ENCODE measurements at regions of chr17 and their contacts with region 1.

Region 1: DNA sequence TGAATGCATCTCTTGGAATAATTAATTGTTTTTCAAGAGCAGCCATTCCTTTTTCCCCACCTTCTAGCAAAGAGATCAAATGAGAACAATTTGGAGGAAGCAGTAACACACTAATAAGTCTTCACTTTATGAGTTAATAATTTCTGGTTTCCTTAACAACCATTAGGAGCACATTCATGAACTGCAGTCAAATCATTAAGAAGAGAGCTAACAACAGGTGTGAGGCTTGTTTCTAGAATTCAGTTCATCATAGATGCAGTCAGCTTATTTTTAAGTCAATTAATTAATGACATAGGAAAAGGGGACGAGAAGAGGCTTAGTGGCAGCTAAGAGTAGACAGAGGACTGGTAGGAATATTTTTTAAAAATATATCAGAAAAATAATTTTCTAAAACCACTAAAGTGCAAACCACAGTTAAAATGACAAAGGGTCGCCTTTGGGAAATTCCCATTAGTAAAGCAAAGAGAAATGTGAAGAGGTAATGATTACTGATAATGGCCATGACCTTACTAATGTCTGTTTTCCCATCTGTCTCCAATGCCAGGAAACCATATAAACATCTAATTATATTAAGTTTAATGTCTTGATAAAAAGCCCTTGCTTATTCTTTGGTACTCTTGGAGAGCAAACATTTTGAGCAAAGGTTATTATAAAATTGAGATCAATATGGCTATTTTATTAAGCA is 184.2 kb downstream of the KCNJ2 start:
- DNase-seq: no peak
- ATAC-seq: peak; percentile 83
- H3K4me3 ChIP-seq: no peak overlapping the region
- H3K27ac ChIP-seq: no peak overlapping the region
- H3K4me1 ChIP-seq: no peaks in the 10 kb centered on the region
- H3K27me3 ChIP-seq: no peaks in the 10 kb centered on the region
- CTCF ChIP-seq: no peak
- EP300 ChIP-seq: no peak
- POLR2A ChIP-seq: no peak
- RAD21 ChIP-seq: no peak

Region 2: GRCh38 chr17:70338946-70339354 is 14.6 kb before region 1 on chr17:
- CTCF ChIA-PET with region 1: interaction called, 15 read pairs
- POLR2A ChIA-PET with region 1: interaction called, 4 read pairs
- RAD21 ChIA-PET with region 1: interaction called, 22 read pairs
- SMC1A ChIA-PET with region 1: interaction called, 36 read pairs
- in situ Hi-C with region 1: no loop called
- intact Hi-C with region 1: no loop called
- DNase-seq: no peak
- ATAC-seq: peak; percentile 86
- H3K4me3 ChIP-seq: no peak overlapping the region
- H3K27ac ChIP-seq: no peak overlapping the region
- H3K4me1 ChIP-seq: no peaks in the 10 kb centered on the region
- H3K27me3 ChIP-seq: no peaks in the 10 kb centered on the region
- CTCF ChIP-seq: no peak
- EP300 ChIP-seq: peak in 1 of 2 experiments; percentile 39; a peak in 1 of 4 replicates
- POLR2A ChIP-seq: no peak
- RAD21 ChIP-seq: no peak

Region 3: GRCh38 chr17:70510288-70510687 is 156.7 kb after region 1 on chr17:
- CTCF ChIA-PET with region 1: no interaction called
- POLR2A ChIA-PET with region 1: no interaction called
- RAD21 ChIA-PET with region 1: no interaction called
- SMC1A ChIA-PET with region 1: no interaction called
- in situ Hi-C with region 1: no loop called
- intact Hi-C with region 1: no loop called
- DNase-seq: no peak
- ATAC-seq: no peak
- H3K4me3 ChIP-seq: no peak overlapping the region
- H3K27ac ChIP-seq: no peak overlapping the region
- H3K4me1 ChIP-seq: no peaks in the 10 kb centered on the region
- H3K27me3 ChIP-seq: no peaks in the 10 kb centered on the region
- CTCF ChIP-seq: no peak
- EP300 ChIP-seq: no peak
- POLR2A ChIP-seq: no peak
- RAD21 ChIP-seq: no peak

Region 4: DNA sequence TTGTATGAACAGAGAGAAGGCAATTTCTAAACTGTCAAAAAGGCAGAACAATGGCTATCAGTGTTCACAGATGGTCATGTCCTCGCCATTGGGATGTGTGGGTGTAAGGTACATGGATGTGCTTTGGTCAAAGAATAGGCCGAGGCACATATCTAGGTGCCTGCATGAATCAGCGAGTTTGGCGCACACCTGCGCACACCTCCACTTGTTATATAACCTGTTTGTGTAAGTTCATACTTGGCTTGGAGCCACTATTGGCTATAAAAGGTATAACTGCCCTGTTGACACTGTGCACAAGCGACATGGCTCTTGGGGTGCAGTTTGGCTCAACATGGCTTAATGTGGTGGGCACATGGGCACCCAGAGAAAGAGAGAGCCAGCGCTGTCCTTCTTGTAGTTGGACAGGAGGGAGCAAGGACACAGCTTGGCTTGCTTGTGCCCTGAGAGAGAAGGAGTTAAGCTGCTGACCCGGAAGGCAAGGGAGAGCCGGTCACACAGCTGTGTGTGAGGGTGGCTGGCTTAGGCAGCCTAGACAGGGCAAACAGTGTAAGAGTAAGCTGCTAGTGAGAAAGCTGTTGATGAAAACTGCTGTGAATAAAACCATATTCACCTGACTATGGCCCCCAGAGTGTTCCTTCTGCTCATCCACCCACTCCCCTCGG is 314.9 kb after region 1 on chr17:
- CTCF ChIA-PET with region 1: no interaction called
- POLR2A ChIA-PET with region 1: no interaction called
- RAD21 ChIA-PET with region 1: no interaction called
- SMC1A ChIA-PET with region 1: no interaction called
- in situ Hi-C with region 1: no loop called
- intact Hi-C with region 1: no loop called
- DNase-seq: no peak
- ATAC-seq: no peak
- H3K4me3 ChIP-seq: no peak overlapping the region
- H3K27ac ChIP-seq: no peak overlapping the region
- H3K4me1 ChIP-seq: no peaks in the 10 kb centered on the region
- H3K27me3 ChIP-seq: no peaks in the 10 kb centered on the region
- CTCF ChIP-seq: no peak
- EP300 ChIP-seq: no peak
- POLR2A ChIP-seq: no peak
- RAD21 ChIP-seq: no peak

Measured in GM12878 (cell line).